Activated CD4-positive, alpha-beta memory T cell treated with anti-CD3 and anti-CD28 coated beads for 36 hours (primary cell): ENCODE measurements at regions of chr6 and their contacts with region 1.

Region 1: DNA sequence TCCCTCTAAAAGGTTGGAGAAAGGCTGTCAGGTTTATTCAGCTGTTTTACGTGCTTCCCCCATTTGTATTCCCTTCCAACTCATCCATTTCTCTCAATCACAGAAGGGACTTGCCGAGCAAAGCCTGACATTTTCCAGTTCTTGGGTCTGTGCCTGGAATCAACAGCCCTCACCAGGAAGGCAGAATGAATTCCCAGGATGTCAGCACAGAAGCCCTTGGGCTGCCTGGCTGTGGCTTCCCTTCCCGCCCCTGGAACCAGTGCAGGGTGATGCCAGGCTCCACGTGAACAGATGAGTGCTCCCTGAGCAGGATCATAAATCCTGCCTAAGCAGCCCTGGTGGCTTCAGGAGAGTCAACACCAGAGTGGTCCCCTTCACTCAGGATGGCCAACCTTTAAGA is 86.1 kb upstream of the CD83 start:
- DNase-seq: no peak
- H3K4me3 Mint-ChIP-seq: no peak overlapping the region
- H3K27ac Mint-ChIP-seq: no peak overlapping the region
- H3K4me1 Mint-ChIP-seq: no peaks in the 10 kb centered on the region
- H3K27me3 Mint-ChIP-seq: peaks cover 39% of the 10 kb centered on the region

Region 2: GRCh38 chr6:13989496-13990144 is 41.9 kb before region 1 on chr6:
- CTCF ChIA-PET with region 1: no interaction called
- POLR2A ChIA-PET with region 1: no interaction called
- intact Hi-C with region 1: loop called (anchors 2 kb)
- DNase-seq: no peak
- H3K4me3 Mint-ChIP-seq: no peak overlapping the region
- H3K27ac Mint-ChIP-seq: no peak overlapping the region
- H3K4me1 Mint-ChIP-seq: no peaks in the 10 kb centered on the region
- H3K27me3 Mint-ChIP-seq: peaks cover 42% of the 10 kb centered on the region

Region 3: GRCh38 chr6:14002176-14002947 is 29.2 kb before region 1 on chr6:
- CTCF ChIA-PET with region 1: no interaction called
- POLR2A ChIA-PET with region 1: no interaction called
- intact Hi-C with region 1: no loop called
- DNase-seq: no peak
- H3K4me3 Mint-ChIP-seq: no peak overlapping the region
- H3K27ac Mint-ChIP-seq: no peak overlapping the region
- H3K4me1 Mint-ChIP-seq: no peaks in the 10 kb centered on the region
- H3K27me3 Mint-ChIP-seq: peaks cover 11% of the 10 kb centered on the region